ENCODE measurements at regions of chr6 and their contacts with region 1.

Region 1: GRCh38 chr6:110815217-110816109 is at the start of gene CDK19:
- DNase-seq: peak; percentile 99
- H3K4me3 Mint-ChIP-seq: peak within 1 kb of the TSS; percentile 98
- H3K27ac Mint-ChIP-seq: peak within 1 kb of the TSS; percentile 98
- H3K4me1 Mint-ChIP-seq: peaks cover 45% of the 10 kb centered on the region
- H3K27me3 Mint-ChIP-seq: no peaks in the 10 kb centered on the region
- total RNA-seq, gene CDK19: 13.0 and 15.7 TPM in 2 replicates

Region 2: GRCh38 chr6:109095027-109095834 is 1720.2 kb before region 1 on chr6 and contains the start of gene CEP57L1:
- intact Hi-C with region 1: loop called (anchors 5 kb)
- DNase-seq: peak; percentile 98
- H3K4me3 Mint-ChIP-seq: peak within 1 kb of the TSS; percentile 90
- H3K27ac Mint-ChIP-seq: peak within 1 kb of the TSS; percentile 100
- H3K4me1 Mint-ChIP-seq: peaks cover 53% of the 10 kb centered on the region
- H3K27me3 Mint-ChIP-seq: no peaks in the 10 kb centered on the region
- total RNA-seq, gene CEP57L1: 14.2 and 15.3 TPM in 2 replicates

Region 3: GRCh38 chr6:110528101-110528929 is 287.1 kb before region 1 on chr6:
- intact Hi-C with region 1: loop called (anchors 5 kb)
- DNase-seq: peak; percentile 86
- H3K4me3 Mint-ChIP-seq: no peak overlapping the region
- H3K27ac Mint-ChIP-seq: no peak overlapping the region
- H3K4me1 Mint-ChIP-seq: peaks cover 11% of the 10 kb centered on the region
- H3K27me3 Mint-ChIP-seq: no peaks in the 10 kb centered on the region

Region 4: DNA sequence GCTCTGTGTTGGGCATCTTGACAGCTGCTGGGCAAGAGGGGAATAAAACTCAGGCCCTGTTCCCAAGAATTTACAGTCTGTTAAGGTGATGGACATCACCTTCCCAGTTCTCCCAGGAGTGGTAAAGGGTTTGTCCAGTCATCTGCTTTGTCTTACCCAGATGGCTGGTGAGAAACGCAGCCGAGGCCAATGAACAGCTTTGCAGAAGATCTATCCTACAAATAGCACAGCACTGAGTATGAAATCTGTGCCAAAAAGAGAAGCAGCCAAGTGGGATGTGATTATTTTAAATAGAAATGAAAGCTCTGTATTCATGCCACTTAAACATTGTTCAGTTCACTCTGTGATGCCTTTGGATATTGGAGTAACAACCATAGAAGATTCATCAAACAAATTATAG is 206.4 kb before region 1 on chr6:
- intact Hi-C with region 1: no loop called
- DNase-seq: no peak
- H3K4me3 Mint-ChIP-seq: no peak overlapping the region
- H3K27ac Mint-ChIP-seq: no peak overlapping the region
- H3K4me1 Mint-ChIP-seq: no peaks in the 10 kb centered on the region
- H3K27me3 Mint-ChIP-seq: peaks cover 1% of the 10 kb centered on the region

Region 5: GRCh38 chr6:110784610-110784979 is 30.9 kb before region 1 on chr6:
- intact Hi-C with region 1: loop called (anchors 2 kb)
- DNase-seq: no peak
- H3K4me3 Mint-ChIP-seq: no peak overlapping the region
- H3K27ac Mint-ChIP-seq: no peak overlapping the region
- H3K4me1 Mint-ChIP-seq: peaks cover 16% of the 10 kb centered on the region
- H3K27me3 Mint-ChIP-seq: no peaks in the 10 kb centered on the region

Region 6: DNA sequence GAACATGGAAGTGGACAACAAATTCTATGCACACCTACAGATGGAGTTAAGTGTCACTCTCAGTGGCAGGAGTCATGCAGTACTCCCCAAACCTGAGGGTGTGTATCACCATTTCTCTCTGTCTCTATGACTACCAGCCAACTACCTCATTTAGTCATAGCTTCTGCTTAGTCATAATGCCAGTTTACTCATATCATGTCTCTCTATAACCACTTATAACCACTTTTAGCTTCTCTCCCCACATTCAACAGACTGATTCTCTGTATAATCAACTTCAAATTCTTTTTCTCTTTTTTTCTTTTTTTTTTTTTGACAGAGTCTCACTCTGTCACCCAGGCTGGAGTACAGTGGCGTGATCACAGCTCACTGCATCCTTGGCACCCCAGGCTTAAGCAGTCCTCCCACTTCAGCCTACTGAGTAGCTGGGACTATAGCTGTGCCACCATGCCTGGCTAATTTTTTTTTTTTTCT is 129.3 kb after region 1 on chr6:
- intact Hi-C with region 1: loop called (anchors 1 kb)
- DNase-seq: peak; percentile 80
- H3K4me3 Mint-ChIP-seq: peak overlapping the region; percentile 32
- H3K27ac Mint-ChIP-seq: peak overlapping the region; percentile 86
- H3K4me1 Mint-ChIP-seq: peaks cover 7% of the 10 kb centered on the region
- H3K27me3 Mint-ChIP-seq: no peaks in the 10 kb centered on the region

Region 7: GRCh38 chr6:110981202-110981600 is 165.7 kb after region 1 on chr6:
- intact Hi-C with region 1: loop called (anchors 1 kb)
- DNase-seq: no peak
- H3K4me3 Mint-ChIP-seq: peak overlapping the region; percentile 98
- H3K27ac Mint-ChIP-seq: peak overlapping the region; percentile 99
- H3K4me1 Mint-ChIP-seq: peaks cover 29% of the 10 kb centered on the region
- H3K27me3 Mint-ChIP-seq: no peaks in the 10 kb centered on the region